ENCODE measurements at regions of chr3 and their contacts with region 1.

Region 1: DNA sequence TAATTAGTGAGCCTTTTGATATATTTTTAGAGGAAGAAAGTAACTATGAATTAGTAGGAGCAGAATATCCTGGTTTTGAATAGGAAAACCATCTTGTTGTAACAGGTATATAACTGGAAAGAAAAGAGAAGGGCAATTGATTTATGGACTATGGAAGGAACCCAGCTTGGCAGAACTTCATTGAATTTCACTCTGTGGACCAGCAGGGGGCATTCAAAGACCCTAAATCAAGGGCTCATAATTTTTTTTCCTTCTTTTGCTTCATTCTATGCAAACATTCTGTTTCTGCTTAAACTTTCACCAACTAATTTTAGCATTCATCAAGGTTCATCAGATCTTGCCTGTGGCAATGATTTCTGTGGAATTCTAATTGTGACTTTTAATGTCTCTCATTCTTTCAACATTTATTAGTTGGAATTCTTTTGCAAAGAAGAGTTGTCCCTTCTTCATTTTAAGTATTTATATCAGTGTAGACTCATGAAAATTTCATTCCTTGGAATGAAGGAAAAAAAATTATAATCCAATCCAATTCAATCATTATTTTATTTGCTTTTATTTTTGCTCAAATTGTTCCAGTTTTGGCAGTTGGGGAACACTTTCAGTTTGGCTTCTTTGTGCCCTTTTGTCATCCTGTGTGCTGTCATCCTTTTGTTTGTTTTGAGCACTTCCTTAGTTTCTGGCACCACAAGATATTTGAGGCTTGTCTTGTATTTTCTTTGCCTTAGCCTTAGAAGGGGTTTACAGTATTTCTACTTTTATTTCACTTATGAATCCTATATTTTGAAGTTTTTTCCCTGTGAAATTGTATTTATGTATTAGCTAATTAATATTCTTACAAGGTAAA is 30.4 kb downstream of the NXPE3 start:
- DNase-seq: no peak
- H3K4me3 ChIP-seq: no peak overlapping the region
- CTCF ChIP-seq: no peak
- POLR2A ChIP-seq: no peak

Region 2: DNA sequence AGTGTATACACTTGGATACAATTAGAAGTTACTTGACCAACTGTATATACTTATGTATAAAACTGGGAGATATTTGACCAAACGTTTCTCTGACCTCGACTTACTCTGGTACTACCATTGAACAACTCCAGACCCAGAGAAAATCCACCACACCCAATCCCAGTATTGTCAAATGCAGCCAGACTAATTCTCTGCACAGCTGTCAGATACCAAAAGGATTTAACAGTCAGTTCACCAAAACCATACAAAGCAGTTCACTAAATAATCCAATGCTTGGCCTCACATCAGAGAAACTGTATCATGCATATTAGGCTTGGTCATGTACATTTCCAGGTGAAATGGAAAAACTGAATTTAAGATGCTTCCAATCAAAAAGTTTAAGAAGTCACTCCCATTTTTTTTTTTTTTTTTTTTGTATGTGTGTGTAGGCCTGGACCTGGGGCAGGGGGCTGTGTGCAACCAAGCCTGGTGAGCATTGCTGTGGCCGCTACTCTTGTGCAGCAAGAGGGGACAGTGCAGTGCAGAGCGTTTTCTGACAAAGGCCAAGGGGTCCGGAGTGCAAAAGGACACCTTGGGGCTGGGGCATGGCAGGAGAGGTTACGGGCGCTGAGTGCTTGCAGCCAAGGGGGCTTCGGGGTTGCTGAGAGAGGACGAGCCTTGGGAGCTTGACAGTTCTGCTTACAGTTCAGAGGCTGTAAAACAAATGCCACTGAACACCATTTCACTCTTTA is 1409.9 kb before region 1 on chr3:
- intact Hi-C with region 1: loop called (anchors 5 kb)
- DNase-seq: no peak
- H3K4me3 ChIP-seq: no peak overlapping the region
- CTCF ChIP-seq: no peak
- POLR2A ChIP-seq: no peak

Region 3: DNA sequence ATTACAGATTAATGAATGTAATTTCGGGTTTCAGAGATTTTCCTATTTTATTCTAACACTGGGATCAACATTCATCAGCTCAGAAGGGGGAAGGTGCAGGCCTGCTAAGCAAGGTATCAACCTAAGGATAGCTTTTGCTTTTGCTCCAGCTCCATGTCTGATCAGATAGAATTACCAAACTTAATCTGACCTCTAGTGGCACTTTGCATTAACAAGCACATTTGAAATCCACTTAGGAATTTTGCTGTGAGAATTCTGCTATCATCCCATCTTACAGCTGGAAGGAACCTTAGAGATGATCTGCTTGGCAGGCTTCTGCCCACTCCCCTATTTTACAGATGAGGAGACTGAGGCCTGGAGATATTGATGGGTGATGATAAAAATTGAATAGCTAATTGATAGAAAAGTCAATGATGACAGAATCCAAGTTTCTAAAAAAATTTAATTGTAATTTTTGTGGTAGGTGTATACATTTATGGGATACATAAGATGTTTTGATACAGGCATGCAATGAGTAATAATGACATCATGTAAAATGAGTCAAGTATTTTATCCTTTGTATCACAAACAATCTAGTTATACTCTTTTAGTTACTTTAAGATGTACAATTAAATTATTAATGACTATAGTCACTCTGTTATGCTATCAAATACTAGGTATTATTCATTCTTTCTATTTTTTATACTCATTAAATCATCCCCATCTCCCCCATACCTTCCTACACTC is 416.2 kb after region 1 on chr3:
- intact Hi-C with region 1: loop called (anchors 2 kb)
- DNase-seq: no peak
- H3K4me3 ChIP-seq: no peak overlapping the region
- CTCF ChIP-seq: no peak
- POLR2A ChIP-seq: no peak

Region 4: DNA sequence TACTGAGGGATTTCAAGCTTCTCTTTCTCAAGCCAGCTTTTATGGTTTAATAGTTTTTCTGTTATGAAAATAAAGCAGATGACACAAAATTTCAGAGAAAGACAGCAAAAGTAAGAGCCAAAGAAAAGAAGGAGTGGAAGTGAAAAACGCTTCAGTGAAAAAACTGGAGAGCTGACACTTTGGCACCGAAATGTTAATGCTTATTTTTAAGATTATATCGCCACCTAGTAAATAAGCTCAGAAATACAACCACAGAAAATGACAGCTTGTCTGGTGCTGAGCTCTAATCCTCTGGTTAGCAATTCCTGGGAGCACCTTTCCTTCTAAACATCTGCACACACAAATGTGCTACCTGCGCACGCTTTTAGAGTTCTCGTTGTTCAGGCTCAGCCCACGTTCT is 727.1 kb after region 1 on chr3:
- intact Hi-C with region 1: loop called (anchors 5 kb)
- DNase-seq: no peak
- H3K4me3 ChIP-seq: no peak overlapping the region
- CTCF ChIP-seq: no peak
- POLR2A ChIP-seq: no peak

Measured in lower leg skin (tissue), 4 donors.